Heart left ventricle (tissue), 16 donors: ENCODE measurements at regions of chr4 and their contacts with region 1.

Region 1: DNA sequence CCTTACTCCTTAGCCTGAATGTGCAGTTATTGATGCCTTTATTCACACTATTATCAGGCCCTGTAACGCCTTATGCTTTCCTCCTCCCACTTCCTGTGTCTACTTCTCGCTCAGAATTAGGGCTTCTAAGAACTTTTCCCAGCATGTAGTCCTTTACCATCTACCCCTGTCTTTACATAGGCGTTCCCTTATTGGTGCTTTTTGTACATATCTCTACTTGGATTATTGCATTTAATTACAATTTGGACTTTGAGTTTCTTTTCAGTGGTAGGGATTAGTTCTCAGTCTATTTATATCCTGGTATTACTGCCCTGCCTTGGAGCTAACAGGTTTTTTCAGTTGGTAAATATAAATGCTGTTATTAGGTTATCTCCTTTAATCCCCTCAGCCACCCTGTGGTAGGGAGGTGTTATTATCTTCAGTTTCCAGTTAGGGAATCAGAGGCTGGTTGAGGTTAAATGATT is 84.0 kb downstream of the RBPJ start:
- DNase-seq: no peak
- ATAC-seq: peak in 1 of 4 donors; percentile 24
- H3K4me3 ChIP-seq: no peak overlapping the region
- H3K27ac ChIP-seq: no peak overlapping the region
- H3K4me1 ChIP-seq: peaks cover 0 to 14% (median 0%) of the 10 kb centered on the region in 12 donors
- H3K27me3 ChIP-seq: no peaks in the 10 kb centered on the region
- CTCF ChIP-seq: peak in 3 of 12 donors; percentile 11
- POLR2A ChIP-seq: no peak

Region 2: DNA sequence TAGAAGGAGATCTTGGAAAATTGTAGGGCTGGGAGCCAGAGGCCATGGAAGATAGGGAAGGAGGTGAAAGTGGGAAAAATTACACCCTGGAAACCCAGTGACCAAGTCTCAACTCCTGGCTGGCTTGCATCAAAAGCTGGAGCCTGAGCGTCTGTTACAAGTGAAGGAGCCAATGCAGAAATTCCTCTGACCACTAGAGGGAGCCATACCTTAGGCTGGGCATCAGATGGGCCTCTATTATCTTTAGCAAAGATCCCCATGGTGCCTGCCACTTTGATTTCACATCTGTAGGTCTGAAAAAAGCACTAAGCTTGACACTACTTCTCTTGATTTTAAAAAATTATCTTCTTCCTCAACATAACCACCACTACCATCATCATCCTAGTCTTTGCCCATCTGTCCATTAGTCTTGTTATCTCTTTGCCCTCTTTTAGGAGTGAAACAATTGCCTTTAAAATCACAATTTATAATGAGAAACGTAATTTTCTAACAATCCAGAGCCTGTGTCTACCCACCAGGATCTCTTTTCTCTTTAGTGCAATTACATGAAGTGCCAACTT is 964.8 kb before region 1 on chr4:
- intact Hi-C with region 1: loop called in 1 of 10 experiments (anchors 5 kb)
- DNase-seq: peak in 2 of 5 donors; percentile 38
- ATAC-seq: peak in 3 of 4 donors; percentile 55 to 76 (median 68)
- H3K4me3 ChIP-seq: no peak overlapping the region
- H3K27ac ChIP-seq: no peak overlapping the region
- H3K4me1 ChIP-seq: peaks cover 0 to 11% (median 5%) of the 10 kb centered on the region in 12 donors
- H3K27me3 ChIP-seq: no peaks in the 10 kb centered on the region
- CTCF ChIP-seq: peak; percentile 71 to 92 (median 86)
- POLR2A ChIP-seq: no peak

Region 3: GRCh38 chr4:25925486-25926201 is 479.1 kb before region 1 on chr4:
- intact Hi-C with region 1: loop called in 1 of 10 experiments (anchors 5 kb)
- DNase-seq: peak in 3 of 5 donors; percentile 38 to 58 (median 44)
- ATAC-seq: peak in 1 of 4 donors; percentile 45
- H3K4me3 ChIP-seq: no peak overlapping the region
- H3K27ac ChIP-seq: no peak overlapping the region
- H3K4me1 ChIP-seq: peaks cover 0 to 52% (median 31%) of the 10 kb centered on the region in 12 donors
- H3K27me3 ChIP-seq: no peaks in the 10 kb centered on the region
- CTCF ChIP-seq: peak; percentile 28 to 66 (median 54)
- POLR2A ChIP-seq: no peak

Region 4: GRCh38 chr4:26028793-26029567 is 375.8 kb before region 1 on chr4:
- intact Hi-C with region 1: loop called in 1 of 10 experiments (anchors 10 kb)
- DNase-seq: peak; percentile 65 to 89 (median 74)
- ATAC-seq: peak; percentile 30 to 95 (median 94)
- H3K4me3 ChIP-seq: peak overlapping the region in 7 of 12 donors; percentile 12 to 35 (median 27)
- H3K27ac ChIP-seq: peak overlapping the region in 1 of 12 donors; percentile 25
- H3K4me1 ChIP-seq: peaks cover 0 to 37% (median 10%) of the 10 kb centered on the region in 12 donors
- H3K27me3 ChIP-seq: peaks cover 0 to 13% (median 0%) of the 10 kb centered on the region in 9 donors
- CTCF ChIP-seq: peak; percentile 60 to 80 (median 69)
- POLR2A ChIP-seq: no peak

Region 5: GRCh38 chr4:26081795-26082498 is 322.8 kb before region 1 on chr4:
- intact Hi-C with region 1: loop called in 2 of 10 experiments (anchors 5 kb)
- DNase-seq: no peak
- ATAC-seq: peak; percentile 43 to 66 (median 55)
- H3K4me3 ChIP-seq: no peak overlapping the region
- H3K27ac ChIP-seq: peak overlapping the region in 1 of 12 donors; percentile 55
- H3K4me1 ChIP-seq: peaks cover 0 to 40% (median 0%) of the 10 kb centered on the region in 12 donors
- H3K27me3 ChIP-seq: peaks cover 0 to 3% (median 0%) of the 10 kb centered on the region in 9 donors
- CTCF ChIP-seq: peak; percentile 49 to 76 (median 69)
- POLR2A ChIP-seq: no peak

Region 6: GRCh38 chr4:26330186-26330787 is 74.5 kb before region 1 on chr4:
- intact Hi-C with region 1: loop called in 1 of 10 experiments (anchors 5 kb)
- DNase-seq: no peak
- ATAC-seq: peak in 3 of 4 donors; percentile 32 to 77 (median 69)
- H3K4me3 ChIP-seq: no peak overlapping the region
- H3K27ac ChIP-seq: no peak overlapping the region
- H3K4me1 ChIP-seq: peaks cover 0 to 54% (median 19%) of the 10 kb centered on the region in 12 donors
- H3K27me3 ChIP-seq: no peaks in the 10 kb centered on the region
- CTCF ChIP-seq: peak; percentile 53 to 78 (median 67)
- POLR2A ChIP-seq: no peak

Region 7: DNA sequence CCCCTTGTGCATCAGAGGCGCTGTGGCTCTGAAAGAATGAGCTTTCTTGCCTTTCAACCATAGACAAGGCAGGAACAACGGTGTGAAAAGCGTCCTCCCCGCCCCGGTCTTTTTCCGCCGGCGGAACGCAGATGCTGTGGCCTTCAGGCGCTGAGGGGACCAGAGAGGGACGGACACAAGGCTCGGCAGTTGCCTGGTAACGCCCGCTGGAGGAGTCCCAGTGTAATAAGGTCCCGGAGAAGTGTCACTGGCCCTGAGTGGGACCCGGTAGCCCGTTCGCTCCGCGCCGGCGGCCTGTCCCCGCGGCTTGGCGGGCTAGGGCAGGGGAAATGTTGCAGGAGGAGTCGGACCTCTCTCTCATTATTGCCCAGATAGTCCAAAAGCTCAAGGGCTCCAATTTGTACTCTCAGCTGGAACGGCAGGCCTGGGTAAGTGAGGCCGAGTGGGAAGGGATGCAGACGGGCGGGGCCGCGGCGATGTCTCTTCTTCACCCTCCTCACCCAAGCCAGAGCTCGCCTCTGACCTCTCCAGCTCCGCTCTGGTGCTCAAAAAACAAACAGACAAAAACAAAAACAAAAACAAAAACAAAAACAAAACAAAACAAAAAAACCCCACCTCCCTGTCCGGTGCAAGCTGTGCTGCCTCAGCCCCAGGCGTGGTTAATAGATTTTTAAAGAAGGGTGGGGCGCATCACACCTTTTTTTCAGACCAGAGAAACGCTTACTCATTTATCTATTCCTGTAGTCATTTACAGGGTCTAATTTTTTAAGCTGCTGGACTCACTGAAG is 179.3 kb after region 1 on chr4 and contains the start of gene TBC1D19:
- intact Hi-C with region 1: no loop called
- DNase-seq: peak; percentile 88 to 92 (median 91)
- ATAC-seq: peak; percentile 99 to 100 (median 100)
- H3K4me3 ChIP-seq: peak within 1 kb of the TSS; percentile 36 to 95 (median 78)
- H3K27ac ChIP-seq: peak within 1 kb of the TSS; percentile 18 to 80 (median 68)
- H3K4me1 ChIP-seq: peaks cover 0 to 22% (median 8%) of the 10 kb centered on the region in 12 donors
- H3K27me3 ChIP-seq: no peaks in the 10 kb centered on the region
- CTCF ChIP-seq: peak in 1 of 12 donors; percentile 7
- POLR2A ChIP-seq: peak in 1 of 2 donors; percentile 51
- total RNA-seq, gene TBC1D19: 6.4 to 10.9 (median 9.2) TPM